Mammary epithelial cell (primary cell): ENCODE measurements at regions of chr7 and their contacts with region 1.

Region 1: GRCh38 chr7:152145853-152146466 is 120.5 kb downstream of the GALNT11 start:
- DNase-seq: peak; percentile 51
- H3K4me3 ChIP-seq: no peak overlapping the region
- H3K27ac ChIP-seq: no peak overlapping the region
- H3K4me1 ChIP-seq: no peaks in the 10 kb centered on the region
- H3K27me3 ChIP-seq: no peaks in the 10 kb centered on the region
- CTCF ChIP-seq: peak; percentile 52 to 73

Region 2: DNA sequence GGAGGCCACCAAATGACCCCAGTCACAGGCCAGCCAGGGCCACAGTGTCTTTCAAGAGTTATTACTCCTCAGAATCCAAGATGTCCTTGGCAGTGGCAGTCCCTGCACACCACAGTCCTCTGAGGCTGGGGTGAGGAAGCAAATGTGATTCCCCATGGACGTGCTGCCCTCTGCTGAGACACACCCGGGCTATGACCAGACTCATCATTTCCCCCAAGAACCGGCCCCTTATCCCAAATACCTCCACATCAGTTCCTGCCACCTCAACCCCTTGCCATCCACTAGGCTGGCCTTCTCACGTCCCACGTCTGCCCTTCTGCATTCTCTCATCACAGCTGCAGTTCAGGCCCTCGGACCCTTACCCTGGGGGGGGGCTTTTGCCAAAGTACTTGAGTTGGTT is 274.0 kb before region 1 on chr7:
- CTCF ChIA-PET with region 1: no interaction called
- dilution Hi-C with region 1: no loop called
- in situ Hi-C with region 1: no loop called
- intact Hi-C with region 1: loop called (anchors 5 kb)
- DNase-seq: no peak
- H3K4me3 ChIP-seq: no peak overlapping the region
- H3K27ac ChIP-seq: no peak overlapping the region
- H3K4me1 ChIP-seq: peaks cover 16% of the 10 kb centered on the region
- H3K27me3 ChIP-seq: peaks cover 9% of the 10 kb centered on the region
- CTCF ChIP-seq: no peak

Region 3: GRCh38 chr7:151992375-151992774 is 153.6 kb before region 1 on chr7:
- CTCF ChIA-PET with region 1: no interaction called
- dilution Hi-C with region 1: no loop called
- in situ Hi-C with region 1: no loop called
- intact Hi-C with region 1: loop called (anchors 2 kb)
- DNase-seq: peak; percentile 27
- H3K4me3 ChIP-seq: no peak overlapping the region
- H3K27ac ChIP-seq: no peak overlapping the region
- H3K4me1 ChIP-seq: no peaks in the 10 kb centered on the region
- H3K27me3 ChIP-seq: no peaks in the 10 kb centered on the region
- CTCF ChIP-seq: peak in 1 of 2 donors; percentile 45

Region 4: DNA sequence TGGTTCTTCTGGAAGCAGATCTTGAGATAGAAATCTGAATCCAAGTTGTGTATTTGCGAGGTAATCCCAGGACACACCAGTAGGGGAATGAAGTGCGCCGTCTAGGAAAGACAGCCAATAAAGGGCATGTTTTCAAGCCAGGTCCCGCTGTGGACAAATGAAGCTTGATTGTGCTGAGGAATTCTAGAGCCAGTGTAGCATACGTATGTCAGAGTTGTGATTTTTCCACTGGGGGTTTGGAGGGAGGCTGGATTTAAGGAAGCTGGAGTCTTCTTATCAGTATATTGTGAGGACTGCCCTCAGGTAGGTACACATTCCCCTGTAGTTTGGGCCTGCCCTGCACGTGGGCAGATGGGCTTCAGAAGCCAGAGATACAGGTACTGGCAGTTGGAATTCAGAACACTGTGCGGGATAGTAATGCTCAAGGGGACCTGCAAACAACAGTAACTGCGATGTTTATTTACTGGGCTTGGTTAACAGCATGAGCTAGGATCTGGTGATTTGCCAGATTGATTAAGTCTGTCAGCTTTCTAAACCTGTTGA is 69.6 kb before region 1 on chr7:
- CTCF ChIA-PET with region 1: no interaction called
- dilution Hi-C with region 1: loop called (anchors 5 kb)
- in situ Hi-C with region 1: no loop called
- intact Hi-C with region 1: loop called (anchors 5 kb)
- DNase-seq: no peak
- H3K4me3 ChIP-seq: no peak overlapping the region
- H3K27ac ChIP-seq: no peak overlapping the region
- H3K4me1 ChIP-seq: peaks cover 14% of the 10 kb centered on the region
- H3K27me3 ChIP-seq: no peaks in the 10 kb centered on the region
- CTCF ChIP-seq: peak; percentile 38 to 42